CD8-positive, alpha-beta T cell (primary cell): ENCODE measurements at regions of chr11 and their contacts with region 1.

Region 1: GRCh38 chr11:126211235-126212088 is at the starts of genes FAM118B and RPUSD4:
- DNase-seq: peak; percentile 98 to 99 (median 98)
- ATAC-seq: peak; percentile 95
- H3K4me3 ChIP-seq: peak within 1 kb of the TSS; percentile 95 to 98
- H3K4me3 Mint-ChIP-seq: peak within 1 kb of the TSS; percentile 99
- H3K27ac ChIP-seq: peak within 1 kb of the TSS; percentile 71 to 80
- H3K27ac Mint-ChIP-seq: peak within 1 kb of the TSS; percentile 95
- H3K4me1 ChIP-seq: peaks cover 18% of the 10 kb centered on the region
- H3K4me1 Mint-ChIP-seq: peaks cover 40% of the 10 kb centered on the region
- H3K27me3 ChIP-seq: no peaks in the 10 kb centered on the region
- H3K27me3 Mint-ChIP-seq: no peaks in the 10 kb centered on the region
- CTCF ChIP-seq: no peak
- total RNA-seq, gene FAM118B: 0.64 to 0.79 TPM
- total RNA-seq, gene RPUSD4: 42.3 to 43.8 TPM

Region 2: DNA sequence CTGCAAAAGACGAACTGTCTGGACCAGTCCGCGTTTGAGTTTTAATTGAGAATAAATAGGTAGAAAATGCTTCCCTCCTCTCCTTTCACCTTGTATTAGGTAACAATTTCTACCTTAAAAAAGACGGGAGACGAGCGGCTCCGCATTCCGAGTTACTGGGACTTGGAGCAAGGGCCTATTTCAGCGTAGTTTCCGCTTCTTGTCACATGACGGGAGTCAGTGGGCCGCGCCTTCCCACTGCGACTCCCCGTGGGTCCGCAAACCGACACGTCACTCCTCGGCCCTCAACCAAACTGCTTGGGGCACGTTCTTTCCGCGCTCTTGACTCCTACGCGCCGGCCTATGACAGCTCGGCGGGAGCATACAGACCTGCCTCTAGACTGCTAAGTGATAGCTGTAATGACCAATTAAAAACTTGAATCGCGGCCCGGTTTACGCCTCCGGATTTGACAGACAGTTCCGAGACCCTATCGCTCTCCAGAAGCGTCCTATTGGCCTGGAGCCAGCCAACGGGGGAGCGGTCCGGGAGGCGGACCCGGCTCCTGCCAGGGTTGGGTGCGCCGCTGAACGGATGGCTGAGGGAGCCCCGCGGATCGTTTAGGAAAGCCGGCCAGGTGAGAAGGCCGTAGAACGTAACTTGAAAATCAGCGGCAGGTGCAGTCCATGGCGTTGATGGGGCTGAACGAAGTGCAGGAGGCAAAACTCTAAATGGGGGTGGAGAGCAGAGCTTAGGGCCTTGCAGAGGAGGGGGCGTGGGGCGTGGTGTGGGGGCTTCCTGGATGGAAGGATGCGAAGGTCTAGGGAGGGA is 619.0 kb before region 1 on chr11 and contains the start of gene STT3A:
- CTCF ChIA-PET with region 1: no interaction called
- POLR2A ChIA-PET with region 1: no interaction called
- intact Hi-C with region 1: loop called in 1 of 2 experiments (anchors 2 kb)
- DNase-seq: peak; percentile 96 to 99 (median 98)
- ATAC-seq: peak; percentile 91
- H3K4me3 ChIP-seq: peak within 1 kb of the TSS; percentile 90 to 97
- H3K4me3 Mint-ChIP-seq: peak within 1 kb of the TSS; percentile 92
- H3K27ac ChIP-seq: peak within 1 kb of the TSS; percentile 88 to 96
- H3K27ac Mint-ChIP-seq: peak within 1 kb of the TSS; percentile 98
- H3K4me1 ChIP-seq: peaks cover 15% of the 10 kb centered on the region
- H3K4me1 Mint-ChIP-seq: peaks cover 43% of the 10 kb centered on the region
- H3K27me3 ChIP-seq: no peaks in the 10 kb centered on the region
- H3K27me3 Mint-ChIP-seq: no peaks in the 10 kb centered on the region
- CTCF ChIP-seq: no peak
- total RNA-seq, gene STT3A: 45.5 to 46.8 TPM

Region 3: GRCh38 chr11:125902927-125903710 is 308.3 kb before region 1 on chr11 and contains the start of gene PUS3:
- CTCF ChIA-PET with region 1: no interaction called
- POLR2A ChIA-PET with region 1: no interaction called
- intact Hi-C with region 1: loop called in 1 of 2 experiments (anchors 1 kb)
- DNase-seq: peak; percentile 67 to 91 (median 87)
- ATAC-seq: peak; percentile 92
- H3K4me3 ChIP-seq: peak within 1 kb of the TSS; percentile 58 to 77
- H3K4me3 Mint-ChIP-seq: peak within 1 kb of the TSS; percentile 95
- H3K27ac ChIP-seq: peak within 1 kb of the TSS; percentile 48 to 67
- H3K27ac Mint-ChIP-seq: peak within 1 kb of the TSS; percentile 91
- H3K4me1 ChIP-seq: peaks cover 16% of the 10 kb centered on the region
- H3K4me1 Mint-ChIP-seq: peaks cover 41% of the 10 kb centered on the region
- H3K27me3 ChIP-seq: peaks cover 5 to 7% of the 10 kb centered on the region in 2 experiments
- H3K27me3 Mint-ChIP-seq: peaks cover 19% of the 10 kb centered on the region
- CTCF ChIP-seq: no peak
- total RNA-seq, gene PUS3: 4.5 to 5.2 TPM

Region 4: DNA sequence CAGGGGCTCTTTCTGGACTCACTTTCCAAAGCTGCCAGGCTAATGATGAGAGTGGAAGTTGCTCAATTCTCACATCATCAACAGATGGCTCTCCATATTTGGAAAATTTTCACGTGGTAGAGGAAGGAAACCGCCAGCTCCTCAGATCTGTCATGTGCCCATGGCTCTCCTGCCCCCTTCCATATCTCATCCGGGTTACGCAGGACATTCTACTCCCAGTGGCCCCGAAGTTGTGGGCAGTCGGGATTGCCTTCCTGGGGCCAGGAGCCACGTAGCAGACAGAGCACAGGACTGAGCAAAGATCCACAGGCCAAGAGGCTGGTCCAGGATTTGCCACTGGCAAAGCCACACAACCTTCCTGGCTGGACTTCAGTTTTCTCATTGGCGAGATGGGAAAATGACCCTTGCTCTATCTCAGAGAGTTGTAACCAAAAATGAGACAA is 38.8 kb before region 1 on chr11:
- CTCF ChIA-PET with region 1: no interaction called
- POLR2A ChIA-PET with region 1: no interaction called
- intact Hi-C with region 1: no loop called
- DNase-seq: no peak
- ATAC-seq: no peak
- H3K4me3 ChIP-seq: no peak overlapping the region
- H3K4me3 Mint-ChIP-seq: no peak overlapping the region
- H3K27ac ChIP-seq: no peak overlapping the region
- H3K27ac Mint-ChIP-seq: no peak overlapping the region
- H3K4me1 ChIP-seq: no peaks in the 10 kb centered on the region
- H3K4me1 Mint-ChIP-seq: no peaks in the 10 kb centered on the region
- H3K27me3 ChIP-seq: no peaks in the 10 kb centered on the region
- H3K27me3 Mint-ChIP-seq: peaks cover 3% of the 10 kb centered on the region
- CTCF ChIP-seq: no peak

Region 5: GRCh38 chr11:126268708-126269579 is 57.5 kb after region 1 on chr11 and contains the starts of genes FOXRED1 and SRPRA:
- CTCF ChIA-PET with region 1: no interaction called
- POLR2A ChIA-PET with region 1: no interaction called
- intact Hi-C with region 1: loop called (anchors 1 kb)
- DNase-seq: peak; percentile 99 to 100 (median 100)
- ATAC-seq: peak; percentile 99
- H3K4me3 ChIP-seq: peak within 1 kb of the TSS; percentile 90 to 98
- H3K4me3 Mint-ChIP-seq: peak within 1 kb of the TSS; percentile 96
- H3K27ac ChIP-seq: peak within 1 kb of the TSS; percentile 90 to 94
- H3K27ac Mint-ChIP-seq: peak within 1 kb of the TSS; percentile 98
- H3K4me1 ChIP-seq: peaks cover 24% of the 10 kb centered on the region
- H3K4me1 Mint-ChIP-seq: peaks cover 39% of the 10 kb centered on the region
- H3K27me3 ChIP-seq: no peaks in the 10 kb centered on the region
- H3K27me3 Mint-ChIP-seq: no peaks in the 10 kb centered on the region
- CTCF ChIP-seq: no peak
- total RNA-seq, gene FOXRED1: 27.4 to 30.5 TPM
- total RNA-seq, gene SRPRA: 234 to 242 TPM

Region 6: DNA sequence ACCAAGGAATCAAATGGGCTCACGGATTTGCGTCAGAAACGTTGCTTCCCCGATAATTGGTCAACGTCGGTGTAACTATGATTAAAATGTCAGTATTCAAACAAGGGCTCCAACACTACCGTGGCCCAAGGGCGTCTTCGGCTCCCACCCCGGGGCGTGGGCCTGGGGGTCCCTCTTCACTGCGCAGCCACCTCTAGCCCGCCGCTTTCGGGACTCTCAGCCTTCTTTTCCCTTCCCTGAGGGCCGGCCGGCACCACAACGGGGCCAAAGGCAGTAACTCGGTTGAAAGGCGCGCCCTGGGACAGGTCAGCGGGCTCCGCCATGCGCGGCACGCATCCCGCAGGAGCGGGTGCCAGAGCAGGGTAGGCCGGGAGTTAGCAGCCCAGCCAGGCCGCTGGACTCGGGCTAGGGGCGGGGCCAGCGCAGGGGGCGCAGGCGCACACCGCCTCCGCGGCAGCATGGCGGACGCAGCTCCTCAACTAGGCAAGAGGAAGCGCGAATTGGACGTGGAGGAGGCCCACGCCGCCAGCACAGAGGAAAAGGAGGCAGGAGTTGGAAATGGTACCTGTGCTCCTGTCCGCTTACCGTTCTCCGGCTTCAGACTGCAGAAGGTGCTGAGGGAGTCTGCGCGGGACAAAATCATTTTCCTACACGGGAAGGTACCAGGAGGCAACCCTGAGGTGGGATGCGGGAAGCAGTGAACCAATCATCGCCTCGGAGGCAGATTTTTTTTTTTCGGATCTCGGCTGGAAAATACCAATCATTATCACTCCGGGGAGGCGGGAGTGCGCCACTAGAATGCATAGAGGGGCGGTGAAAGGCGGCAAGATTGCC is 92.4 kb after region 1 on chr11 and contains the start of gene DCPS:
- CTCF ChIA-PET with region 1: no interaction called
- POLR2A ChIA-PET with region 1: no interaction called
- intact Hi-C with region 1: loop called in 1 of 2 experiments (anchors 1 kb)
- DNase-seq: peak; percentile 66 to 92 (median 84)
- ATAC-seq: peak; percentile 96
- H3K4me3 ChIP-seq: peak within 1 kb of the TSS; percentile 93 to 97
- H3K4me3 Mint-ChIP-seq: peak within 1 kb of the TSS; percentile 88
- H3K27ac ChIP-seq: peak within 1 kb of the TSS; percentile 92 to 94
- H3K27ac Mint-ChIP-seq: peak within 1 kb of the TSS; percentile 89
- H3K4me1 ChIP-seq: peaks cover 21% of the 10 kb centered on the region
- H3K4me1 Mint-ChIP-seq: peaks cover 35% of the 10 kb centered on the region
- H3K27me3 ChIP-seq: no peaks in the 10 kb centered on the region
- H3K27me3 Mint-ChIP-seq: no peaks in the 10 kb centered on the region
- CTCF ChIP-seq: no peak
- total RNA-seq, gene DCPS: 7.3 to 7.5 TPM

Region 7: GRCh38 chr11:126375726-126376125 is 164.3 kb after region 1 on chr11:
- CTCF ChIA-PET with region 1: no interaction called
- POLR2A ChIA-PET with region 1: no interaction called
- intact Hi-C with region 1: no loop called
- DNase-seq: no peak
- ATAC-seq: no peak
- H3K4me3 ChIP-seq: no peak overlapping the region
- H3K4me3 Mint-ChIP-seq: no peak overlapping the region
- H3K27ac ChIP-seq: no peak overlapping the region
- H3K27ac Mint-ChIP-seq: no peak overlapping the region
- H3K4me1 ChIP-seq: no peaks in the 10 kb centered on the region
- H3K4me1 Mint-ChIP-seq: no peaks in the 10 kb centered on the region
- H3K27me3 ChIP-seq: no peaks in the 10 kb centered on the region
- H3K27me3 Mint-ChIP-seq: no peaks in the 10 kb centered on the region
- CTCF ChIP-seq: no peak